ENCODE measurements at regions of chr9 and their contacts with region 1.

Region 1: DNA sequence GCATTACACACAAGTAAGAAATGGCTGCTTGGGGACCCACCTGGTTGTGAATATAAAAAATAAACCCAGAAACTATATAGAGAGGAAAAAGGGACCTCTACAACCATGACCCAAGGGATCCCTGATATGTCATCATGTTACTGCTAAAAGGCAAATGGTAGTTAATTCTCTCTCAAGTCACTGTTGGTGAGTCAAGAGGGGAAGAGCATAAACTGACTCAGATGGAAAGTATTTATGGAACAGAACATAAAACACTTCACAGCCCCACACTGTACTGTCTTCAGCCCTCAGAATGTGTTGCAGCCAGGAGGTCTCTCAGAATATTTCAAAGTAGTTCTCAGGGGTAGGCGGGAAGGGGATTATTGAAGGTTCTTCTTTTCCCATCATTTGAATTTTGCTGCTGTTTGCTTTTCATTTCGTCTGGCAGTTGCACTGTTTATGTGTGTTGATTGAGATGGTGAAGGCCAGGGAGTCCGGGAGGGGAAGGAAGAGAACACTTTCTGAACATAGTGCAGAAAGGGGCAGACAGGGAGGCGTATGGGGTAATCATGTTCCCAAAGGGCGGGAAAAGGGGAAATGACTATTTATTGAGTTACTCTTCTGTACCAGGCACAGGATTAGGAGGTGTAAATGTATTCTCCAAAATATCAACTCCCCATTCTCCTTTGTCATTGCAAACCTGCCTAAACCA is 85.5 kb downstream of the TEK start:
- DNase-seq: peak; percentile 66
- H3K4me3 ChIP-seq: no peak overlapping the region
- H3K27ac ChIP-seq: peak overlapping the region; percentile 38
- H3K4me1 ChIP-seq: peaks cover 16% of the 10 kb centered on the region
- H3K27me3 ChIP-seq: no peaks in the 10 kb centered on the region
- CTCF ChIP-seq: no peak

Region 2: DNA sequence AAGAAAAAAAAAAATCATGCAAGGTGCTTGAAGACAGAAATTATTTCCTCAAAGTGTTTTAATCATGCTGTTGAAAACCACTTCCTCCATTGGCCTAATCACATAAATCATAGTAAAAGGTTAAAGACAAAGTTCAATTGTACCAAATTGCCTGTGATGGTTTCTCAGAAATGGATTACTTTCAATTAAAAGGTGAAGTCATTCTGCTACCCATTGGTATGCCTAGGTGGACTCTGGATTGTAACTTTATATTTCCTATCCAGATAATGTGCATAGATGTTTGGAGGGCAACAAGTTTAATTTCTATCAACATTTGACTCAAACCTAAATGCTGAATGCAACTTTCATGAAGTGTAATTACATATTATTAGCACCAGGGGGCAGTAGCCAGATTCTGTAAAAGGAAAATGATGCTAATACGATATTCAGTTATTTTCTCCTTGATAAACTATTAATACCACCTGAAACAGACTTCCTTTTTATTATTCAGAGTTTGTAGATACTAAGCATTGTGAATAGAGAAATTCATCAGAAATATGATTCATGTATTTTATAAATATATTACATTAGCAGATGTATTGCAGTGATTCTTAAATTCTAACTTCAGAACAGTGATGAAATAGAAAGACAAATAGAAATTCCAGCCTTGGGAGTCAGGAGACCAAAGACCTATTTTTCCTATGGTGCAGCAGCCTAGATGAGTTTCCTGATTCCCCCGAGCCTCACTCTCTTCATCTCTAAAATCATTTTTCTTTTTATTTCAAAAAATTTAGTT is 450.2 kb before region 1 on chr9:
- CTCF ChIA-PET with region 1: no interaction called
- dilution Hi-C with region 1: no loop called
- in situ Hi-C with region 1: no loop called
- intact Hi-C with region 1: loop called (anchors 2 kb)
- DNase-seq: peak; percentile 9
- H3K4me3 ChIP-seq: no peak overlapping the region
- H3K27ac ChIP-seq: no peak overlapping the region
- H3K4me1 ChIP-seq: peaks cover 3% of the 10 kb centered on the region
- H3K27me3 ChIP-seq: no peaks in the 10 kb centered on the region
- CTCF ChIP-seq: peak; percentile 61 to 66

Region 3: DNA sequence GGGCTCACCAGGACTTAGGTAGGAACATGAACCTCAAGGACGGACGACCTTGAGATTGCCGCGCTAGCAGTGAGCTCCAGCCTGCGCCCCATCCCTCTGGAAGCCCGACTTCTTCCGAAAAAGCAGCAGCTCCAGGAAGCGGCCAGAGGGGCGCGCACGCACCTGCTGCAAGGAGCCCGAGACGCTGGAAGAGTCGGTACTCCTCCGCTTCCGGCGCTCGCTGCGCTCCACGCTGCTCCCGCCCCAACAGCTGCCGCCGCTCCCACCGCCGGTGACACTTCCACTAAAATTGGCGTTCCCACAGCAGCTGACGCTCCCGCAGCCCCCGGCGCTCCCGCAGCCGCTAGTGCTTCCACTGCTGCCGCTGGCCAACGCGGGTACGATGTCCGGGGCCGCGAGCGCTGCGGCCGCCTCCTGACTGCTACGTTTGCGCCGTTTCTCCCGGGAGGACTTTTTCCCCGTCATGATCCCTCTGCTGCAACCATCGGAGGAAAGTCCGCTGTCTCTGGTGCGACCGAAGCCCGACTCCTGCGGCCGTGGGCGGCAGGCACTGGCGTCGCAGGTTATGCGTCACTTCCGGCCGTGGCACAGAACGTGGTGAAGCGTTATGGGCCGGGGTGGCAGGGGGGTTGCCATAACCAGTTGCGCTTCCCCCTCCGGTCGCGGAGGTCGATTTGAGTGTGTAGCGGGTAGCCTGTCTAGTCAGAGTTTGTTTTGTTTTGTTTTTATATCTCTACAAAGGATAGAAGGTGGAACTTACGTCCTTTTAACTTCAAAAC is 302.1 kb before region 1 on chr9 and contains the start of gene CAAP1:
- CTCF ChIA-PET with region 1: no interaction called
- dilution Hi-C with region 1: no loop called
- in situ Hi-C with region 1: no loop called
- intact Hi-C with region 1: loop called (anchors 5 kb)
- DNase-seq: peak; percentile 85
- H3K4me3 ChIP-seq: peak within 1 kb of the TSS; percentile 94 to 99 (median 98)
- H3K27ac ChIP-seq: peak within 1 kb of the TSS; percentile 86
- H3K4me1 ChIP-seq: peaks cover 7% of the 10 kb centered on the region
- H3K27me3 ChIP-seq: no peaks in the 10 kb centered on the region
- CTCF ChIP-seq: peak; percentile 21 to 59
- total RNA-seq, gene CAAP1: 17.1 to 19.2 TPM

Region 4: GRCh38 chr9:26946753-26947727 is 247.5 kb before region 1 on chr9 and contains the start of gene PLAA:
- CTCF ChIA-PET with region 1: no interaction called
- dilution Hi-C with region 1: no loop called
- in situ Hi-C with region 1: no loop called
- intact Hi-C with region 1: loop called (anchors 5 kb)
- DNase-seq: peak; percentile 93
- H3K4me3 ChIP-seq: peak within 1 kb of the TSS; percentile 84 to 98 (median 93)
- H3K27ac ChIP-seq: peak within 1 kb of the TSS; percentile 96
- H3K4me1 ChIP-seq: peaks cover 21% of the 10 kb centered on the region
- H3K27me3 ChIP-seq: no peaks in the 10 kb centered on the region
- CTCF ChIP-seq: peak in 1 of 2 donors; percentile 33
- total RNA-seq, gene PLAA: 34.1 to 39.7 TPM

Region 5: GRCh38 chr9:27033823-27034403 is 160.6 kb before region 1 on chr9:
- CTCF ChIA-PET with region 1: no interaction called
- dilution Hi-C with region 1: no loop called
- in situ Hi-C with region 1: loop called in 1 of 2 experiments (anchors 10 kb)
- intact Hi-C with region 1: loop called (anchors 1 kb)
- DNase-seq: peak; percentile 41
- H3K4me3 ChIP-seq: no peak overlapping the region
- H3K27ac ChIP-seq: no peak overlapping the region
- H3K4me1 ChIP-seq: peaks cover 8% of the 10 kb centered on the region
- H3K27me3 ChIP-seq: no peaks in the 10 kb centered on the region
- CTCF ChIP-seq: peak; percentile 81 to 88

Region 6: DNA sequence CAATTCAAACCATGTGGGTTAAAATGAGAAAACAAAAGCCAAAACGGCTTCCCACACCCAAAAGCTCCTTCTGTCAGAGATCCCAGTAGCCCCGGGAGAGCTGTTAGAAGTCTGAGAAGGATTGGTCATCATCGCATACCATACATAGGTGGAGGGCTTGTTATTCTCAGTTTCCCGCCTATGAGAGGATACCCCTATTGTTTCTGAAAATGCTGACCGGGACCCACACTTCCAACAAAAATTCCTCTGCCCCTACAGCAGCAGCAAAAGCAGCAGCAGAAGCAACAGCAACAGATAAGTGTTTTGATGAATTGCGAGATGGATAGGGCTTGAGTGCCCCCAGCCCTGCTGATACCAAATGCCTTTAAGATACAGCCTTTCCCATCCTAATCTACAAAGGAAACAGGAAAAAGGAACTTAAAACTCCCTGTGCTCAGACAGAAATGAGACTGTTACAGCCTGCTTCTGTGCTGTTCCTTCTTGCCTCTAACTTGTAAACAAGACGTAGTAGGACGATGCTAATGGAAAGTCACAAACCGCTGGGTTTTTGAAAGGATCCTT is 85.5 kb before region 1 on chr9 and contains the start of gene TEK:
- CTCF ChIA-PET with region 1: no interaction called
- dilution Hi-C with region 1: no loop called
- in situ Hi-C with region 1: no loop called
- intact Hi-C with region 1: no loop called
- DNase-seq: no peak
- H3K4me3 ChIP-seq: no peak within 1 kb of the TSS
- H3K27ac ChIP-seq: no peak within 1 kb of the TSS
- H3K4me1 ChIP-seq: no peaks in the 10 kb centered on the region
- H3K27me3 ChIP-seq: no peaks in the 10 kb centered on the region
- CTCF ChIP-seq: no peak
- total RNA-seq, gene TEK: 0.09 TPM in 1 of 2 donors, not detected in the other

Region 7: GRCh38 chr9:27125030-27125429 is 69.5 kb before region 1 on chr9:
- CTCF ChIA-PET with region 1: no interaction called
- dilution Hi-C with region 1: no loop called
- in situ Hi-C with region 1: no loop called
- intact Hi-C with region 1: loop called (anchors 5 kb)
- DNase-seq: peak; percentile 96
- H3K4me3 ChIP-seq: no peak overlapping the region
- H3K27ac ChIP-seq: peak overlapping the region; percentile 85
- H3K4me1 ChIP-seq: peaks cover 25% of the 10 kb centered on the region
- H3K27me3 ChIP-seq: no peaks in the 10 kb centered on the region
- CTCF ChIP-seq: no peak

Region 8: DNA sequence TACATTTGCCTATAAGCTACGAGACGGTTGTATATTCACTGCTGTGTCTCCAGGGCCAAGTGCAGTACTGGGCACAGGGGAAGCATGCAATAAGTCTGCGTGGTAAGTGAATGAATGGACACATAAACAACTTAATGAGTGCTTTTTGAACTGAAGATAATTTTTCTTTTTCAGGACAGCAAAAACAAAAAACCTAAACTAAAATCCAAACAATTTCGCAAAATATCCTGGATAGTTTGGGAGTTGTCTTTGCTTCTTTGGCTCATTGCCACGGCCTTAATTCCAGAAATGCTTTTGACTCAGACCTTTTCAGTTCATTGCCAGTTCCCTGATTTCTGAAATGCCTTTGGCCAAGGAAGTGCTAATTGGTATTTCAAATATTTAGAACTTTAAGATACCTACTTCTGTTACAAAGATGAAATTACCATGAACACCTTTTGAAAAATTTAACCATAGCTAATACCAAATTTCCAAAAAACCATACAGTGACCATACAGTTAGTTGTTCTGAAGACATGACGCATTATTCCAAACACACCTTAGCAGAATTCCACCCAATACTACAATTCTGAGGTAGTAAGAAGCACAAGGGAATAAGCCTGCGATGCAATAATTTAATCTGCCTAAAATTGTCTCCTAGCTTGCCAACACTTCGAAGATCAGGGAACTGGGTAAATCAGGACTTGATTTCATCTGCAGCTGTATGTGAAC is 42.7 kb before region 1 on chr9:
- CTCF ChIA-PET with region 1: no interaction called
- dilution Hi-C with region 1: no loop called
- in situ Hi-C with region 1: no loop called
- intact Hi-C with region 1: loop called (anchors 2 kb)
- DNase-seq: peak; percentile 30
- H3K4me3 ChIP-seq: no peak overlapping the region
- H3K27ac ChIP-seq: no peak overlapping the region
- H3K4me1 ChIP-seq: peaks cover 28% of the 10 kb centered on the region
- H3K27me3 ChIP-seq: no peaks in the 10 kb centered on the region
- CTCF ChIP-seq: no peak

Region 9: DNA sequence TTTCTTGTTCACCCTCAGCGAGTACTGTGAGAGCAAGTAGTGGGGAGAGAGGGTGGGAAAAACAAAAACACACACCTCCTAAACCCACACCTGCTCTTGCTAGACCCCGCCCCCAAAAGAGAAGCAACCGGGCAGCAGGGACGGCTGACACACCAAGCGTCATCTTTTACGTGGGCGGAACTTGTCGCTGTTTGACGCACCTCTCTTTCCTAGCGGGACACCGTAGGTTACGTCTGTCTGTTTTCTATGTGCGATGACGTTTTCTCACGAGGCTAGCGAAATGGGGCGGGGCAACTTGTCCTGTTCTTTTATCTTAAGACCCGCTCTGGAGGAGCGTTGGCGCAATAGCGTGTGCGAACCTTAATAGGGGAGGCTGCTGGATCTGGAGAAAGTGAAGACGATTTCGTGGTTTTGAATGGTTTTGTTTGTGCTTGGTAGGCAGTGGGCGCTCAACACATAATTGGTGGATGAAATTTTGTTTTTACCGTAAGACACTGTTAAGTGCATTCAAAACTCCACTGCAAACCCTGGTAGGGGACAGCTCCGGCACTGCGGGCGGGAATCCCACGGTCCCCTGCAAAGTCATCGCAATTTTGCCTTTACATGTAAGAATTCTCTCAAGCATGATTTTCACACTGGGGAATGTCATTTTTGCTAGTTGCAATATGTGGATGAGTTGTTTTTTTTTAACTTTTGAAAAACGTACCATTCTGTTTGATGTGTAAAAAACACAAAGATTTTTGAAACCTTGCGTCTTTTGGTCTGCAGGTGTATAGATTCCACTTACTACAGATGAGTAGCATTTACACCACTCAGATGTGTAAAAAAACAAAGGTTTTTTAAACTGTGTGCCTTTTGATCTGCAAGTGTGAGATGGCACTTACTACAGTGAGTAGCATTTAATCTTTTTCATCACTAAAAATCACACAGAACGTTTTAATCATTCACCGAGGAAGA is 379.4 kb after region 1 on chr9:
- CTCF ChIA-PET with region 1: no interaction called
- dilution Hi-C with region 1: no loop called
- in situ Hi-C with region 1: no loop called
- intact Hi-C with region 1: no loop called
- DNase-seq: peak; percentile 99
- H3K4me3 ChIP-seq: peak overlapping the region; percentile 60 to 77 (median 76)
- H3K27ac ChIP-seq: peak overlapping the region; percentile 74
- H3K4me1 ChIP-seq: peaks cover 13% of the 10 kb centered on the region
- H3K27me3 ChIP-seq: no peaks in the 10 kb centered on the region
- CTCF ChIP-seq: no peak

Measured in mammary epithelial cell (primary cell).